Cardiac septum (tissue), 1 donor: ENCODE measurements at regions of chr6 and their contacts with region 1.

Region 1: DNA sequence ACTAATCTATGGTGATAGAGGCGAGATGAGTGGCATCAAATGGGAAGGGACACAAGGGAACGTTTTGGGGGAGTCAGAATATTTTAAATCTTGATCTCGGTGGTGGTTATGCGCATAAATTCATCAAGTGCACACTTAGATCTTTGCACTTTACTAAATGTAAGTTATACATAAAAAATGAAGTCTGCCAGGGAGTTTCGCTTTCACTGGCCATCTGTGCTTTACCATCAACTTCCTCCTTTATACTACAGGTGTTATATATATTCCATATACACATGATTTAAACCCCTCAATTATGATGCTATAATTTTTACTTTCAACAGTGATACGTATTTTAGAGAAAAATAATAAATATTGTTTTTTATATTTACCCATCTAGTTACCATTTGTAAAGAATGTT is 97.6 kb upstream of the AKIRIN2 start:
- DNase-seq: no peak

Region 2: GRCh38 chr6:87407901-87408720 is 391.5 kb before region 1 on chr6 and contains the start of gene CFAP206:
- intact Hi-C with region 1: loop called (anchors 10 kb)
- DNase-seq: peak; percentile 89
- total RNA-seq, gene CFAP206: not detected

Region 3: GRCh38 chr6:87472525-87473418 is 326.9 kb before region 1 on chr6 and contains the start of gene SLC35A1:
- intact Hi-C with region 1: loop called (anchors 2 kb)
- DNase-seq: peak; percentile 94
- total RNA-seq, gene SLC35A1: 10.9 TPM

Region 4: DNA sequence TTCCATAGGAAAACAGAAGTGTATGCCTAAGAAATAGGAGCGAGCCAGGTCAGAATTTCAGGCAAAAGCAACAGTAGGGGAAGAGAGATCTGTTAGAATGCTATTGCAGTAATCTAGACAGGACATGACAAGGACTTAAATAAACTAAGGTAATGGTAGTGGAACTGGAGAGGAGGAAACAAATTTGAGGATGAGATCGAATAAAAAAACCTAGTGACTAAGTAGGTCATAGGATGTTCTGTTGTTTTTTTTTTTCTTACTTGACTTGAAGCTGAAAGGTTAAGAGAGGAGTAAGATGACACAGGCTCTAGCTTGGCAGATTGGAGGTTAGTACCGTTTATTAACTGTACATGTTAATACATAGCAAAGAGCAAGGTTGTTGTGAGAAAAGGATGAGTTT is 181.1 kb before region 1 on chr6:
- intact Hi-C with region 1: loop called (anchors 10 kb)
- DNase-seq: no peak

Region 5: GRCh38 chr6:87660226-87660911 is 139.3 kb before region 1 on chr6:
- intact Hi-C with region 1: loop called (anchors 10 kb)
- DNase-seq: no peak

Region 6: DNA sequence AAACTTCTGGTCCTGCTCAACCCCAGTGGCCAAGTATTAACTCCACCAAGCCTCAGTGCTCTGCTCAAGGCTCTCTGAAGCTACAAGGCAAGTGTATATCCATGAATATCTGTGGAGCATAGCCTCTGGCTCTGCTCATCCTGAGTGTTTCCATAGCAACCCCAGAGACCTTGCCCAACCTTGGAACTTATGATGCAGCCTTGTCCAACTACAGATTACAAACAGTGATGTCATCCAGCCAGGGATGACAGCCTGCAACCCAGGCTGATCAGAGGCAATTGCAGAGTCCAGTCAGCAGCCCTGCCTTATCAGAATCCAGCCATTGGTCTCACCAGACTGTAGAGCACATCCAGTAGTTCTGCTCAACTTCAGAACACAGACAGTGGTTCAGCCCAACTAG is 182.5 kb after region 1 on chr6:
- intact Hi-C with region 1: no loop called
- DNase-seq: no peak